Stomach (tissue), 19 donors: ENCODE measurements at regions of chr12 and their contacts with region 1.

Region 1: GRCh38 chr12:49967042-49967776 is 5.5 kb downstream of the AQP5 start:
- DNase-seq: peak; percentile 95 to 96
- H3K4me3 ChIP-seq: peak overlapping the region; percentile 37 to 49 (median 40)
- H3K27ac ChIP-seq: peak overlapping the region in 2 of 5 donors; percentile 17 to 27
- H3K4me1 ChIP-seq: peaks cover 8 to 41% (median 34%) of the 10 kb centered on the region in 4 donors
- H3K27me3 ChIP-seq: peaks cover 0 to 46% (median 0%) of the 10 kb centered on the region in 3 donors
- CTCF ChIP-seq: peak in 6 of 7 experiments; percentile 70 to 97 (median 90)
- EP300 ChIP-seq: no peak
- POLR2A ChIP-seq: no peak

Region 2: DNA sequence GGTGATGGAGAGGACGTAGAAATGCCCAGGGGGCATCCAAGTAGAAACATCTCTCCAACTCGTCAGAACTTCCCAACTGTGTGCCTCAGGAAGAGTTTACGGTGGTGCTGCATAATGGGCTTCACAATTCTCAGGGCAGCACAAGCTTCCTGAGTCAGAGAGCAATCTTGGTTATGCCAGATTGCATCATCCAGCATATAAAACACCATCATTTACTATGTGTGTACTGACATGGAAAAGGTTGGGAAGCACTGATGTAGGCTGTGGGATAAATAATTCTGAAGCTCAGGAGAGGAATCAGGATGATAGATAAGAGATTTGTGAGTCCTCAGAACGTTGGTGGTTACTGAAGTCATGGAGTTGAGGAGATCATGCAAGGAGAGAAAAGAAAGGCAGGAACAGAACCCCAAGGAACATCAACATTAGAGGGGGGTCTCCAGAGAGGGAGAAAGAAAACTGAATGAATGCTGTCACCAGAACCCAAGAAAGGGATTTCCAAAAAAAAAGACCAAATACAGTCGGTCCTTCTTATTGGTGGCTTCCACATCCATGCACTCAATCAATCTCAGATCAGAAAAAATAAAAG is 134.3 kb before region 1 on chr12:
- intact Hi-C with region 1: no loop called
- DNase-seq: no peak
- H3K4me3 ChIP-seq: no peak overlapping the region
- H3K27ac ChIP-seq: no peak overlapping the region
- H3K4me1 ChIP-seq: peaks cover 7 to 11% (median 10%) of the 10 kb centered on the region in 4 donors
- H3K27me3 ChIP-seq: no peaks in the 10 kb centered on the region
- CTCF ChIP-seq: no peak
- EP300 ChIP-seq: no peak
- POLR2A ChIP-seq: no peak

Region 3: GRCh38 chr12:50055831-50056638 is 88.8 kb after region 1 on chr12:
- intact Hi-C with region 1: loop called (anchors 5 kb)
- DNase-seq: peak; percentile 46 to 77
- H3K4me3 ChIP-seq: peak overlapping the region in 1 of 4 donors; percentile 61
- H3K27ac ChIP-seq: no peak overlapping the region
- H3K4me1 ChIP-seq: peaks cover 19 to 43% (median 35%) of the 10 kb centered on the region in 4 donors
- H3K27me3 ChIP-seq: peaks cover 0 to 26% (median 10%) of the 10 kb centered on the region in 3 donors
- CTCF ChIP-seq: peak in 5 of 7 experiments; percentile 71 to 98 (median 91)
- EP300 ChIP-seq: no peak
- POLR2A ChIP-seq: no peak